HCT116 (cell line): ENCODE measurements at regions of chr9 and their contacts with region 1.

Region 1: DNA sequence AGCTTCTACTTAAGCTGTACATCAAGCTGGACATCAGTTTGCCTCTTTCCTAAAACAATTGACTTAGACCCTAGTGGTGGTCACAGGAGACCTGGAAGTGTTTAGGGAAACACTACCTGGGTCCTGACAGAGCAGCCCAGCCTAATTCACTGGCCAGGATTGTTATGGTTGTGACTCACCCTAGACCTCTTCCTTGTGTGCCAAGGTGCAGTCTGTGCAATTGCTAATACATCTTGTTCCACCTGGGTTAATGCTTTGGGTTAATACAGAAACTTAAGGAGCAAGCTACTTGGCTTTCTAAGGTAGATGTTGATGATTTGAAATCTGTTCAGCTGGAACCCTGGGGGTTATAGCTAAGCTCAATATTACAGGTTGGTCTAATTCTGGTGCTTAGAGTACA is 48.7 kb upstream of the SLC46A2 start:
- DNase-seq: no peak
- ATAC-seq: no peak; the same call in 1 of the 2 replicates
- H3K4me3 ChIP-seq: no peak overlapping the region
- H3K27ac ChIP-seq: no peak overlapping the region
- H3K4me1 ChIP-seq: peaks cover 0 to 6% of the 10 kb centered on the region in 2 experiments; a peak in 1 of 4 replicates
- H3K27me3 ChIP-seq: peaks cover 2% of the 10 kb centered on the region
- CTCF ChIP-seq: no peak
- POLR2A ChIP-seq: no peak
- RAD21 ChIP-seq: no peak

Region 2: DNA sequence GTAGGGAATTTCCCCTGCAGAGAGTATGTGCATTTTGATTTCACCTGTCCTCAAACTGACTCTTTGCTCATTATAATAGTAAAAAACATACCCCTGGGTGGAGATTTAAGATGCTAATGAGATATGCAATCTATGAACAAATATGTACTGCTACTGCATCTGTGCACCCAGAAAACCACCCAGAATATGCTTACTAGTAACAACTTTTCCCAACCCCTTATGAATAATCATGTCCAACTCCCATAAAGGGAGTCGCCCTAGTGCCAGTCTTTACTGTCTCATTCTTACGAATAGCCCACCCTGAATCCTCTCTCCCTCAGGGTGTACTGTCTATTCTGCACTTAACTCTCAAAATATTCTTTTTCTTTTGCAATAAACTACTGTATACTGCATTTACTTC is 156.1 kb after region 1 on chr9:
- CTCF ChIA-PET with region 1: no interaction called
- POLR2A ChIA-PET with region 1: no interaction called
- RAD21 ChIA-PET with region 1: no interaction called
- intact Hi-C with region 1: loop called (anchors 10 kb)
- DNase-seq: no peak
- ATAC-seq: no peak
- H3K4me3 ChIP-seq: no peak overlapping the region
- H3K27ac ChIP-seq: no peak overlapping the region
- H3K4me1 ChIP-seq: no peaks in the 10 kb centered on the region
- H3K27me3 ChIP-seq: no peaks in the 10 kb centered on the region
- CTCF ChIP-seq: no peak
- POLR2A ChIP-seq: no peak
- RAD21 ChIP-seq: no peak